ENCODE measurements at regions of chr5 and their contacts with region 1.

Region 1: GRCh38 chr5:40688127-40688761 is 8.5 kb downstream of the PTGER4 start:
- DNase-seq: peak; percentile 97
- ATAC-seq: peak; percentile 63
- H3K4me3 ChIP-seq: peak overlapping the region; percentile 11
- H3K27ac ChIP-seq: peak overlapping the region; percentile 41
- H3K4me1 ChIP-seq: peaks cover 56% of the 10 kb centered on the region
- H3K27me3 ChIP-seq: no peaks in the 10 kb centered on the region
- CTCF ChIP-seq: peak; percentile 96

Region 2: GRCh38 chr5:39640552-39640951 is 1047.7 kb before region 1 on chr5:
- CTCF ChIA-PET with region 1: no interaction called
- POLR2A ChIA-PET with region 1: no interaction called
- intact Hi-C with region 1: loop called (anchors 2 kb)
- DNase-seq: no peak
- ATAC-seq: no peak
- H3K4me3 ChIP-seq: no peak overlapping the region
- H3K27ac ChIP-seq: peak overlapping the region; percentile 93
- H3K4me1 ChIP-seq: peaks cover 41% of the 10 kb centered on the region
- H3K27me3 ChIP-seq: no peaks in the 10 kb centered on the region
- CTCF ChIP-seq: no peak

Region 3: DNA sequence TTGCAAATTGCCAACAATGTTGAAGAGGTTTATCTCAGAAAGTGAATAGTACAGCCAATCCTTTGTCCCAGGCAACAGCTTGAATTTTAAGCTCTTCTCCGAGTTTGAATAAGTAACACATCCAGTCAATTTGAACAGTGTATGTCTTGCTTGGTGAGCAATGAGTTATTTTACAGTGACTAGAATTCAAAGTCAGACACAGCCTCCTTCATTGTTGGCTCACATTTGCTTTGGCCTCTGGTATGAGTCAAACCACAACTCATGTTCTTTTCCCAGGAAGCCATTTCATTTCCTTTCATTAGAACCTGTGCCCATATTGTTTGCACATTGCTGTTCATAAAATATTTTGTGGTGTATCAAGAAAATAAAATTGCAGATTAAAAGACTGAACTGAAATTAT is 641.5 kb before region 1 on chr5:
- CTCF ChIA-PET with region 1: no interaction called
- POLR2A ChIA-PET with region 1: no interaction called
- intact Hi-C with region 1: loop called (anchors 2 kb)
- DNase-seq: peak; percentile 93
- ATAC-seq: peak; percentile 92
- H3K4me3 ChIP-seq: 0 out of 2 replicates have a peak overlapping the region, but pooled peaks have one; percentile 2
- H3K27ac ChIP-seq: peak overlapping the region; percentile 93
- H3K4me1 ChIP-seq: peaks cover 30% of the 10 kb centered on the region
- H3K27me3 ChIP-seq: no peaks in the 10 kb centered on the region
- CTCF ChIP-seq: no peak

Region 4: GRCh38 chr5:40333459-40334244 is 354.6 kb before region 1 on chr5:
- CTCF ChIA-PET with region 1: no interaction called
- POLR2A ChIA-PET with region 1: no interaction called
- intact Hi-C with region 1: loop called (anchors 5 kb)
- DNase-seq: peak; percentile 85
- ATAC-seq: peak; percentile 91
- H3K4me3 ChIP-seq: peak overlapping the region; percentile 1; the same call in 1 of the 2 replicates
- H3K27ac ChIP-seq: peak overlapping the region; percentile 79
- H3K4me1 ChIP-seq: peaks cover 20% of the 10 kb centered on the region
- H3K27me3 ChIP-seq: no peaks in the 10 kb centered on the region
- CTCF ChIP-seq: no peak

Region 5: DNA sequence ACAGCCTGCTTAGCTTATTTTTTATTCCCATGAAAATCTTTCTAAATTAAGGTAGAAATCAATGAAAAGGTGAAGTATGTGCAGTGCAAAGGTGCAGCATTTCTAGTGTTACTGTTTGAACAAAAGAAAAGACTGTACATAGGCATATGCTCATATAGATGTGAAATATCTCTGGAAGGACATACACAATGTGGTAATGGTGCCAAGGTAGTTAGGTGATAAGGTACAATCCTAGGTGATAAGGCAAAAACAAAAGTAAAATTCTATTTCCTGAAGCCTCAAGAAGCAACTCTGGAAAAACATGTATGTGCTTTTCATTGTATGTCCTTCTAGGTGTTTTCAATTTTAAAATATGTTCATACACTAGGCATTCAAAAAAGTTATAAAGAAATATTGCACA is 147.9 kb before region 1 on chr5:
- CTCF ChIA-PET with region 1: no interaction called
- POLR2A ChIA-PET with region 1: interaction called, 20 read pairs
- intact Hi-C with region 1: no loop called
- DNase-seq: no peak
- ATAC-seq: no peak
- H3K4me3 ChIP-seq: no peak overlapping the region
- H3K27ac ChIP-seq: no peak overlapping the region
- H3K4me1 ChIP-seq: no peaks in the 10 kb centered on the region
- H3K27me3 ChIP-seq: no peaks in the 10 kb centered on the region
- CTCF ChIP-seq: no peak

Region 6: DNA sequence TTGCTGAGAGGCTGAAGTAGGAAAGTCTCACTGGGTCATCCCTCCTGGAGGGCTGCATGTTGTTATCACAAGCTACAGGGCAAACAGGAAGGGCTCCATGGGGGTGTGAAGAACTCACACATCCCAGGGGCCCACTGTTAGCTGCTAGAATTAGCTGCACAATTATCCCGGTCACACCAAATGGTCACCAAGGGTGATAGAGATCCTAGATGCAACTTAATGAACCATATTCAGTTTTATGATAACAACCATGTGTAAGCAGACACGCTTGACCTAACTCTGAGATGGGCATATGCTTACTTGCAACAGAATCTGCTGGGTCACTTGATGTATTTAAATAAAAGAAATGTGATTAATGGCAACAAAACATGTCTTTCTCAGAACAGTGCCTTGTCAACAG is 668.5 kb after region 1 on chr5:
- CTCF ChIA-PET with region 1: no interaction called
- POLR2A ChIA-PET with region 1: no interaction called
- intact Hi-C with region 1: no loop called
- DNase-seq: no peak
- ATAC-seq: no peak
- H3K4me3 ChIP-seq: no peak overlapping the region
- H3K27ac ChIP-seq: no peak overlapping the region
- H3K4me1 ChIP-seq: no peaks in the 10 kb centered on the region
- H3K27me3 ChIP-seq: no peaks in the 10 kb centered on the region
- CTCF ChIP-seq: no peak

Measured in PC-3 (cell line).